Kidney (tissue), 22 donors: ENCODE measurements at regions of chr11 and their contacts with region 1.

Region 1: GRCh38 chr11:76810151-76810853 is 27.1 kb downstream of the TSKU start:
- DNase-seq: peak in 1 of 5 donors; percentile 46
- H3K4me3 ChIP-seq: no peak overlapping the region
- H3K27ac ChIP-seq: peak overlapping the region in 1 of 2 donors; percentile 0
- H3K4me1 ChIP-seq: peaks cover 0 to 6% (median 3%) of the 10 kb centered on the region in 3 donors
- H3K27me3 ChIP-seq: no peaks in the 10 kb centered on the region
- CTCF ChIP-seq: peak; percentile 60

Region 2: DNA sequence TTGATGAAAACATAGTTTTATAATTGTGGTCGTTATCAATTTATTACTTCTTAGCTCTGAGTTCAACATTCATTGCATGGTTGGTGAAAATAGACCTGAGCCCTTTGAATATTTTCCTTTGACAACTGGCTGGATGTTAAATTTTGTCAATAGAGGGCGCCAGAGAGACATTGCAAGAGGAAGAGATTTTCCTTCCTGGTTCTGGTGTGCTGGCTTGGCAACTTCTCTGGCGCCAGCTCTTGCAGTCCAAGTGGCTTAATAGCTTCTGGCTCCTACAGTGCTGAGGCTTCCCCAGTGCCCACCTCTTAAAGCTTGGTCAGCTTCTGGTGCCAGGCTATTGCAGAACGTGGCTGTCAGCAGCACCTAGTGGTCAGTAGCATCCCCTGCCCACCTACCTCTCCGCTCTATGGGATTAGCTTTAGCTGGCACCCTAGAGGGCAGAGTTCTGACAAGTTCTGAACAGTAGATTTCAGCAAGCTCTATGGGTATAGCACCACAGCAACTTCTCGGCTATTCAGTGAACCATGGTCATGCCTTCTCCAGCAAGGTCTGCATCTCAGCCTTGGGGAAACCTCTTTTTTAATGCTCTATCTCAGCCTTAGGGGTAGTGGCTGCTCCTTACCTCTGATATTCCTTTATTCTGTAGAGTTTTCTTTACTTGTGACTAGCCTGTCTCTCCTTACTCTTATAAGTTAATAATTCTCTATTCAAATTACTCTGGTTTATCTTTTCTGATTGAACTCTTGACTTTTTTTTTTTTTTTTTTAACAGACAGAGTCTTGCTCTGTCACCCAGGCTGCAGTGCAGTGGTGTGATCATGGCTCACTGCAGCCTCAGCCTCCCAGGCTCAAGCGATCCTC is 109.8 kb after region 1 on chr11:
- intact Hi-C with region 1: loop called (anchors 10 kb)
- DNase-seq: peak; percentile 74 to 91 (median 81)
- H3K4me3 ChIP-seq: peak overlapping the region; percentile 4 to 42 (median 28)
- H3K27ac ChIP-seq: no peak overlapping the region
- H3K4me1 ChIP-seq: peaks cover 0 to 3% (median 0%) of the 10 kb centered on the region in 3 donors
- H3K27me3 ChIP-seq: no peaks in the 10 kb centered on the region
- CTCF ChIP-seq: peak; percentile 70